Activated naive CD8-positive, alpha-beta T cell treated with anti-CD3 and anti-CD28 coated beads, Interleukin-2, amount 10 ng/mL, durations not matched to agents 7 days and 5 days (primary cell): ENCODE measurements at regions of chr5 and their contacts with region 1.

Region 1: GRCh38 chr5:138464008-138464387 is 1.3 kb upstream of the EGR1 start:
- DNase-seq: peak; percentile 97
- ATAC-seq: peak; percentile 51
- H3K4me3 Mint-ChIP-seq: peak overlapping the region; percentile 84
- H3K27ac Mint-ChIP-seq: peak overlapping the region; percentile 95
- H3K4me1 Mint-ChIP-seq: peaks cover 28% of the 10 kb centered on the region
- H3K27me3 Mint-ChIP-seq: peaks cover 13% of the 10 kb centered on the region

Region 2: DNA sequence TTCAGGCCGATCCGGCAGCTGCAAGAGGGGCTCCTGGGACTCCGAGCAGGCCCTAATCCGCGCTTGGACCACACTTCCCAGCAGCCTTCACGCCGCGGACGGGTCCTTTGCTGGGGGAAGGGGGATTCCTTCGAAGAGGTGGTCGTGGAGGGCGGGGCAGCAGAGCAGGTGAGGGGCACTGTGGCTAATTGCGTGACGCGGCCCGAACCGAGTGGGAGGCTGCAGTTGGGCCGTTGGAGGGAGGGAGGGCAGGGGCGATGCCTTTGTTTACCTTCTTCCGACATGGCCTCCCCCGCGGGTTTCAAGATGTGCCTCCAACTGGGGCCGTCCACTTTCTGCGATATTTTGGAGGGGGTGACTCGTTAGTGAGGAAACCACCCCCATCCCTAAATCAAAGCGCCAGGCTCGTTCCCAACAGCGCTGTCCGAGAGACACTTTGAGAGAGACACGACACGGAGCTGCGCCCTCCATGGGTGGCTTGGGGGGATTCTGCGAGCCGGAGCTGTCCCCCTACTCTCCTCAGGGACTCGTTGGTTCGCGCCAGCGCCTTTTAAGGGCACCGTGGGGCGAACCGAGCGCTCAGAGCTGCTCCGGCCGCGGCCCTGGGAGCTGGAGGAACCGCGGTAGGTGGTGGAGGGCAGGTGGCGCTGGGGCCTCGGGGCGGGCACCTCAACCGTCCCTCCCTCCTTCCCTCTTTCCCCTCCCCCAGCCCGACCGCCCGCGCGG is 126.2 kb before region 1 on chr5 and contains the start of gene FAM53C:
- POLR2A ChIA-PET with region 1: interaction called, 11 read pairs
- DNase-seq: peak; percentile 97
- ATAC-seq: peak; percentile 88
- H3K4me3 Mint-ChIP-seq: peak within 1 kb of the TSS; percentile 90
- H3K27ac Mint-ChIP-seq: peak within 1 kb of the TSS; percentile 98
- H3K4me1 Mint-ChIP-seq: peaks cover 26% of the 10 kb centered on the region
- H3K27me3 Mint-ChIP-seq: peaks cover 2% of the 10 kb centered on the region
- total RNA-seq, gene FAM53C: 29.3 to 31.2 TPM

Region 3: GRCh38 chr5:138449501-138450239 is 14.3 kb before region 1 on chr5:
- POLR2A ChIA-PET with region 1: interaction called, 11 read pairs
- DNase-seq: peak; percentile 83
- ATAC-seq: peak; percentile 82
- H3K4me3 Mint-ChIP-seq: peak overlapping the region; percentile 48
- H3K27ac Mint-ChIP-seq: peak overlapping the region; percentile 10
- H3K4me1 Mint-ChIP-seq: peaks cover 5% of the 10 kb centered on the region
- H3K27me3 Mint-ChIP-seq: peaks cover 4% of the 10 kb centered on the region

Region 4: GRCh38 chr5:138491669-138492559 is 27.9 kb after region 1 on chr5:
- POLR2A ChIA-PET with region 1: interaction called, 13 read pairs
- DNase-seq: peak; percentile 88
- ATAC-seq: peak; percentile 100
- H3K4me3 Mint-ChIP-seq: peak overlapping the region; percentile 93
- H3K27ac Mint-ChIP-seq: peak overlapping the region; percentile 83
- H3K4me1 Mint-ChIP-seq: peaks cover 3% of the 10 kb centered on the region
- H3K27me3 Mint-ChIP-seq: peaks cover 31% of the 10 kb centered on the region

Region 5: GRCh38 chr5:138542956-138543729 is 79.1 kb after region 1 on chr5 and contains the start of gene ETF1:
- POLR2A ChIA-PET with region 1: interaction called, 56 read pairs
- DNase-seq: peak; percentile 97
- ATAC-seq: peak; percentile 92
- H3K4me3 Mint-ChIP-seq: peak within 1 kb of the TSS; percentile 98
- H3K27ac Mint-ChIP-seq: peak within 1 kb of the TSS; percentile 99
- H3K4me1 Mint-ChIP-seq: peaks cover 50% of the 10 kb centered on the region
- H3K27me3 Mint-ChIP-seq: no peaks in the 10 kb centered on the region
- total RNA-seq, gene ETF1: 65.2 to 68.1 TPM

Region 6: GRCh38 chr5:138582959-138583358 is 119.0 kb after region 1 on chr5:
- POLR2A ChIA-PET with region 1: no interaction called
- DNase-seq: no peak
- ATAC-seq: no peak
- H3K4me3 Mint-ChIP-seq: no peak overlapping the region
- H3K27ac Mint-ChIP-seq: no peak overlapping the region
- H3K4me1 Mint-ChIP-seq: peaks cover 3% of the 10 kb centered on the region
- H3K27me3 Mint-ChIP-seq: peaks cover 24% of the 10 kb centered on the region